Heart left ventricle (tissue), 16 donors: ENCODE measurements at regions of chr5 and their contacts with region 1.

Region 1: DNA sequence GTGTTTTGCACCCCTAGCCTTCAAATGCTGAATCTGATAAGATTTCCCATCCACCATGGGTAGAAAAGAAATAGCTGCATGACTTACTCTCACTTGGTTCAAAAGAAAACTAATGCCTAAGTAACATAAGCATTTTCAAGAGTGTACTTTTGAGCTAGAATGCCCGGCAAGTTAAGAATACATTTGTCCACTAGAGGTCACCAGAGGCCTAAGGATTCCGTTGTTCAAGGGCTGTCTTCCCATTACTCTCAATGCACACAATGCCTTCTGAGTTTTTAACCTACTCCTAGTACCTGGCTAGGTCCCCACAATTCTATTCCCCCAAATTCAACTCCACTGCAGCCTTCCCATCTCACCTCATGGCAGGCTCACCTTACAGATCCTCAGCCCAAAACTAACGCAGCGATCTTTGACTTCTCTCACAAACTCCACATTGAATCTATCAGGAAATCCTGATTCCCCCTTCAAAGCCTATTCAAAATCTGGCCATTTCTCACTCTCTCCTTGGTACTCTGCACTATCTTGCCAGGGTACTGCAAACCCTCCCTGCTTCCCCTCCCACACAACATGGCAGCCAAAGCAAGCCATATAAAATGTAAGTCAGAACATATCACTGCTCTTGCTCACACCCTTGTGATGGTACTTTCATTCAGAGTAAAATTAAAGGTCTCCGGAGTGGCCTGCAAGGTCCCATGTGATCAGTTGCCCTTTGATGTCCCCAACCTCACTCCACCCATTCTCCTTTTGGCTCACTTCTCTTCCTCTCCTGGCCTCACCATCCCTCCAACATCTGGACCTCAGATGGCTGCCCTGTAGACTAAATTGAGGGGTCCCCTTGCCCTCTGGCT is 13.4 kb downstream of the OXCT1 start:
- DNase-seq: peak in 2 of 5 donors; percentile 46 to 51
- ATAC-seq: peak; percentile 78 to 85 (median 84)
- H3K4me3 ChIP-seq: no peak overlapping the region
- H3K27ac ChIP-seq: no peak overlapping the region
- H3K4me1 ChIP-seq: peaks cover 0 to 6% (median 0%) of the 10 kb centered on the region in 12 donors
- H3K27me3 ChIP-seq: no peaks in the 10 kb centered on the region
- CTCF ChIP-seq: peak; percentile 72 to 85 (median 78)
- POLR2A ChIP-seq: no peak

Region 2: DNA sequence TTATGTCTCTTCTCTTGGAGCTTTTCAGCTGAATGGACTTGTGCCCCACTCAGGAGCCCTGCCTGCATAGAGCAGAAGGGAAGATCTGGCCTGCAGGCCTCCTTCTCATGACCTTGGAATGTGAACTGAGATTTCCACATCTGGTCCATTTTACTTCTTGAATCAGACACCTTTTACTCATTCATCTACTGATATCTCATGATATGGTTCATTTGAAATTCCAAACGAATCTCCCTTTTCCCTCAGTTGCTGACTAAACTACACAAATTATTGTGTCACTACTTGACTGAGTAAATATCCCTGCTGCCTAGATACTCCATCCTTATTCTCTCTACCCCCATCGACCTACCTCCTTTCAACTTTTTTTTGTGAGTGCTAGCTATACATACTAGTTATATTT is 485.1 kb before region 1 on chr5:
- intact Hi-C with region 1: no loop called
- DNase-seq: no peak
- ATAC-seq: peak in 2 of 4 donors; percentile 27
- H3K4me3 ChIP-seq: no peak overlapping the region
- H3K27ac ChIP-seq: peak overlapping the region in 2 of 12 donors; percentile 17 to 30
- H3K4me1 ChIP-seq: peaks cover 0 to 34% (median 12%) of the 10 kb centered on the region in 12 donors
- H3K27me3 ChIP-seq: no peaks in the 10 kb centered on the region
- CTCF ChIP-seq: no peak
- POLR2A ChIP-seq: no peak

Region 3: GRCh38 chr5:42005561-42006153 is 148.8 kb after region 1 on chr5:
- intact Hi-C with region 1: loop called in 1 of 10 experiments (anchors 5 kb)
- DNase-seq: no peak
- ATAC-seq: no peak
- H3K4me3 ChIP-seq: no peak overlapping the region
- H3K27ac ChIP-seq: no peak overlapping the region
- H3K4me1 ChIP-seq: no peaks in the 10 kb centered on the region
- H3K27me3 ChIP-seq: no peaks in the 10 kb centered on the region
- CTCF ChIP-seq: peak; percentile 49 to 77 (median 66)
- POLR2A ChIP-seq: no peak

Region 4: DNA sequence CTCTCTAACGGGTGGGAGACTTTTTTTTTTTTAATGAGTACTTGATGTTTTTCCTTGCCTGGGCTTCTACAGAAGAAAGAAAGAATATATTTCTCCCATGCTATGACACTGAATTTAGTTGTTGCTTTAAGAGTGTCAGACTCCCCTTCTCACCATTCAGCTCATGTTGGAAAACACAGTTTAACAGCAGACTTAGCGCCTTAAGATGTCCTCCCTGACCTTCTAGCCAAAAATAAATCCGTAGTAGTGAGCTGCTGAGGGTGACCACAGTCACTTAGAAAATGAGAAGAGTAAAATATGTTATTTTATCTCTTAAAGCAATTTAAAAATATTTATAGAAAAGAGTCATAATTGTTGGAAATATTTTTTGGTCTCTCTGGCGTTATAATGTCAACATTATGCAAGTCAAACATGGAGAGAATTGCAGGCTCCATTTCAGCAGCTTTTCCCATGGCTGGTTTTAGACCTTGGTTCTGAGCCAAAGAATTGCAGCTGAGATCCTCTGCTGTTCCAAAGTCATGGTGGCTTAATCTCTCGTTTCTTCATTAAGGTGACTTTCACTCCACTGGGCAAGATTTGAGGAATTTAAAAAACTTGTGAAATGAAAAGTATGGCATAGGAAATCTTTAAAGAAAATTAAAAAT is 709.9 kb after region 1 on chr5:
- intact Hi-C with region 1: loop called in 1 of 10 experiments (anchors 10 kb)
- DNase-seq: peak in 1 of 5 donors; percentile 29
- ATAC-seq: peak; percentile 49 to 79 (median 66)
- H3K4me3 ChIP-seq: peak overlapping the region in 7 of 12 donors; percentile 1 to 19 (median 4)
- H3K27ac ChIP-seq: peak overlapping the region in 11 of 12 donors; percentile 36 to 67 (median 54)
- H3K4me1 ChIP-seq: peaks cover 4 to 46% (median 21%) of the 10 kb centered on the region in 12 donors
- H3K27me3 ChIP-seq: no peaks in the 10 kb centered on the region
- CTCF ChIP-seq: no peak
- POLR2A ChIP-seq: no peak

Region 5: DNA sequence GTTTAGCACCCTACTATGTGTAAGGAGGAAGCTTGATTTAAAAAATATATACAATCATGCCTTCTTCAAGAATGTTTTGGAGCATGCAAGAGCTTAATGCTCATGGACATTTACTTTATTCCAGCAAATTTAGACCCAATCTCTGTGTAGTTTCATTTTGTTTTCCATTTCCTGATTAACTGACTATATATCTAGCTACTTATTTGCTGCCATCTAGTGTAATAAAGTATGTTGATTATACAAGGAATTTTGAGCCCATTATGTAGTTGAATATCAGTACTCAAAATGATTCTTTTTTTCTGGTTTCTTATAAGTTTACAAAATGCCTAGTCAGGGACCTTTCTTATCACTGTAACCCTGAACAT is 799.8 kb after region 1 on chr5:
- intact Hi-C with region 1: loop called in 1 of 10 experiments (anchors 10 kb)
- DNase-seq: no peak
- ATAC-seq: peak in 2 of 4 donors; percentile 49 to 64
- H3K4me3 ChIP-seq: peak overlapping the region in 8 of 12 donors; percentile 1 to 47 (median 26)
- H3K27ac ChIP-seq: no peak overlapping the region
- H3K4me1 ChIP-seq: peaks cover 0 to 29% (median 14%) of the 10 kb centered on the region in 12 donors
- H3K27me3 ChIP-seq: no peaks in the 10 kb centered on the region
- CTCF ChIP-seq: peak in 10 of 12 donors; percentile 10 to 63 (median 40)
- POLR2A ChIP-seq: no peak

Region 6: GRCh38 chr5:42889311-42889933 is 1032.6 kb after region 1 on chr5:
- intact Hi-C with region 1: loop called in 6 of 10 experiments (anchors 2 to 10 kb)
- DNase-seq: peak in 4 of 5 donors; percentile 68 to 78 (median 74)
- ATAC-seq: peak; percentile 86 to 96 (median 91)
- H3K4me3 ChIP-seq: no peak overlapping the region
- H3K27ac ChIP-seq: no peak overlapping the region
- H3K4me1 ChIP-seq: peaks cover 0 to 7% (median 0%) of the 10 kb centered on the region in 12 donors
- H3K27me3 ChIP-seq: no peaks in the 10 kb centered on the region
- CTCF ChIP-seq: peak; percentile 83 to 99 (median 91)
- POLR2A ChIP-seq: no peak